IMR-90 (cell line): ENCODE measurements at regions of chr21 and their contacts with region 1.

Region 1: DNA sequence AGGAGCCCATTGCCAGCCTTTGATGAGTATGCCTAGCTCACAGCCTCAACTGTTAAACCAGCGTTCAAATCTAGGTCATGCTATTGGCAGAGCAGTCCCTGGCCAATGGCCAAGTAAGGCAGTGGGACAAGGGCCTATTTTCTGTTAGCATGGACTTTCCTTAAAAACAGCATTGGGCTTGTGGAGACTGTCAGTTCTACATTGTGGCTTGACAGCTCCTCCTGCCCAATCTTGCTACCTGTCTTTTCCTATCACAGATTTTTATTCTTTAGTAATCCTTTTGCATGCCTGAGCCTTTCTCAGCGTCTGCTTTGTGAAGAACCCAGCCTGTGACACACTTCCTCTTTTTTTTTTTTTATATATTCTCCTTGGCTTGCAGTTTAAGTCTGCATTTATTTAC is 56.4 kb downstream of the DIP2A start:
- DNase-seq: peak; percentile 13
- ATAC-seq: no peak
- H3K4me3 ChIP-seq: no peak overlapping the region
- H3K27ac ChIP-seq: no peak overlapping the region
- H3K4me1 ChIP-seq: peaks cover 3% of the 10 kb centered on the region; the same call in 1 of the 2 replicates
- H3K27me3 ChIP-seq: no peaks in the 10 kb centered on the region
- CTCF ChIP-seq: no peak
- POLR2A ChIP-seq: no peak
- RAD21 ChIP-seq: no peak

Region 2: GRCh38 chr21:45726438-45726837 is 788.7 kb before region 1 on chr21:
- CTCF ChIA-PET with region 1: no interaction called
- POLR2A ChIA-PET with region 1: no interaction called
- dilution Hi-C with region 1: no loop called
- in situ Hi-C with region 1: no loop called
- intact Hi-C with region 1: no loop called
- DNase-seq: no peak
- ATAC-seq: no peak
- H3K4me3 ChIP-seq: no peak overlapping the region
- H3K27ac ChIP-seq: no peak overlapping the region
- H3K4me1 ChIP-seq: peaks cover 2% of the 10 kb centered on the region; the same call in 1 of the 2 replicates
- H3K27me3 ChIP-seq: no peaks in the 10 kb centered on the region; the same call in 1 of the 2 replicates
- CTCF ChIP-seq: no peak
- POLR2A ChIP-seq: no peak
- RAD21 ChIP-seq: no peak

Region 3: DNA sequence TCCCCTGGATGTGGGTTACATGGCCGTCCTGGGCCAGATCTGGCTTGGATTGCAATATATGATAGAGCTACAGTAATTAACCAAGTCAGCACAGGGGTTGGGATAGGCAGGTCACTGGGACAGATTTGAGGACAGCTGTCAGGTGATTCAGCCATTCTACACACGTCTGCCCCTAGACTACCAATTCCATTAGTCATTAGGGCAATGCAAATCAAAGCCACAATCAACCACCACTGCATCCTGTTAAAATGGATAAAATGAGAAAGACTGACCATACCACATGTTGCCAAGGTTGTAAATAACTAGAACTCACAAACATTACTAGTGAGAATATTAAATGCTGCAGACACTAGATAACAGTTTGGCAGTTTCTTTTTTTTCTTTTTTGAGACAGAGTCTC is 207.5 kb before region 1 on chr21:
- CTCF ChIA-PET with region 1: no interaction called
- POLR2A ChIA-PET with region 1: no interaction called
- dilution Hi-C with region 1: no loop called
- in situ Hi-C with region 1: no loop called
- intact Hi-C with region 1: no loop called
- DNase-seq: peak; percentile 73
- ATAC-seq: peak; percentile 48
- H3K4me3 ChIP-seq: no peak overlapping the region
- H3K27ac ChIP-seq: no peak overlapping the region
- H3K4me1 ChIP-seq: no peaks in the 10 kb centered on the region
- H3K27me3 ChIP-seq: no peaks in the 10 kb centered on the region
- CTCF ChIP-seq: no peak
- POLR2A ChIP-seq: no peak
- RAD21 ChIP-seq: no peak

Region 4: GRCh38 chr21:46551636-46552241 is 36.6 kb after region 1 on chr21:
- CTCF ChIA-PET with region 1: no interaction called
- POLR2A ChIA-PET with region 1: no interaction called
- dilution Hi-C with region 1: no loop called
- in situ Hi-C with region 1: no loop called
- intact Hi-C with region 1: loop called (anchors 1 kb)
- DNase-seq: no peak
- ATAC-seq: no peak
- H3K4me3 ChIP-seq: no peak overlapping the region
- H3K27ac ChIP-seq: no peak overlapping the region
- H3K4me1 ChIP-seq: no peaks in the 10 kb centered on the region
- H3K27me3 ChIP-seq: no peaks in the 10 kb centered on the region
- CTCF ChIP-seq: no peak
- POLR2A ChIP-seq: no peak
- RAD21 ChIP-seq: no peak

Region 5: DNA sequence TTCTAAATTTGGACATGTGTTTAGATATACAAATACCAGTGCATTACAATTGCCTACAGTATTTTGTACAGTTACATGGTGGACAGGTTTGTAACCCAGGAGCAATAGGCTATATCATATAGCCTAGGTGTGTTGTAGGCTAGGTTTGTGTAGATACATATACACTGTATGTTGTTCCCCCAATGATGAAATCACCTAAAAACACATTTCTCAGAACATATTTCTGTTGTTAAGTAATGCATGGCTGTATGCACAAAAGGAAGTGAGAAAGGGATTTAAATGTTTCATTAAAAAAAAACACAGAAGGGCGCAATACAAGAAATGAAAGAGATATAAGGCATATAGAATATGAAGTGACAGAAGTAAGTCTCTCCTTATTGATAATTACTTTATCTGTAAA is 57.7 kb after region 1 on chr21:
- CTCF ChIA-PET with region 1: no interaction called
- POLR2A ChIA-PET with region 1: no interaction called
- dilution Hi-C with region 1: no loop called
- in situ Hi-C with region 1: no loop called
- intact Hi-C with region 1: no loop called
- DNase-seq: no peak
- ATAC-seq: no peak
- H3K4me3 ChIP-seq: no peak overlapping the region
- H3K27ac ChIP-seq: no peak overlapping the region
- H3K4me1 ChIP-seq: no peaks in the 10 kb centered on the region
- H3K27me3 ChIP-seq: no peaks in the 10 kb centered on the region
- CTCF ChIP-seq: no peak
- POLR2A ChIP-seq: no peak
- RAD21 ChIP-seq: no peak

Region 6: DNA sequence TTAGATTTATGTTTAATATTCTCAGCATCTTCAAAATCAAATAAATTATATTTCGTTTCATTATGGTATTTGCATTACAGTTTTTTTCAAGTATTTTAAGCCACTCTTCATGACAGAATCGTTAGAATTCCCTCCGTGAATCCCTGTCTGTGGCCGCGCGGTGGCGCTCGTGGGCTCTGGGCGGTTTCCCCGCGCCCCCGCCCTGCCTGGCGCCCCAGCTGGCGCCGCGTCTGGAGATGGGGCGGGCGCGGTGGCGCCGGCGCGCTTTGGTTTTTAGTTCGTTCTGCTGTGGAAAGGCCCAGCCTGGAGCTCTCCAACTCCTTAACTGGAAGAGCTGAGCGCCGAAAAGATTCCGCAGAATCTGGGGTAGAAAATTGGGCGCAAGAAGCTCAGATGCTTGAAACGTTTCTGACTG is 146.1 kb after region 1 on chr21:
- CTCF ChIA-PET with region 1: no interaction called
- POLR2A ChIA-PET with region 1: interaction called, 13 read pairs
- dilution Hi-C with region 1: no loop called
- in situ Hi-C with region 1: no loop called
- intact Hi-C with region 1: no loop called
- DNase-seq: peak; percentile 82
- ATAC-seq: peak; percentile 93
- H3K4me3 ChIP-seq: no peak overlapping the region
- H3K27ac ChIP-seq: peak overlapping the region; percentile 17; the same call in 1 of the 2 replicates
- H3K4me1 ChIP-seq: no peaks in the 10 kb centered on the region
- H3K27me3 ChIP-seq: no peaks in the 10 kb centered on the region
- CTCF ChIP-seq: peak; percentile 93
- POLR2A ChIP-seq: no peak
- RAD21 ChIP-seq: peak; percentile 69